PC-3 (cell line): ENCODE measurements at regions of chr3 and their contacts with region 1.

Region 1: DNA sequence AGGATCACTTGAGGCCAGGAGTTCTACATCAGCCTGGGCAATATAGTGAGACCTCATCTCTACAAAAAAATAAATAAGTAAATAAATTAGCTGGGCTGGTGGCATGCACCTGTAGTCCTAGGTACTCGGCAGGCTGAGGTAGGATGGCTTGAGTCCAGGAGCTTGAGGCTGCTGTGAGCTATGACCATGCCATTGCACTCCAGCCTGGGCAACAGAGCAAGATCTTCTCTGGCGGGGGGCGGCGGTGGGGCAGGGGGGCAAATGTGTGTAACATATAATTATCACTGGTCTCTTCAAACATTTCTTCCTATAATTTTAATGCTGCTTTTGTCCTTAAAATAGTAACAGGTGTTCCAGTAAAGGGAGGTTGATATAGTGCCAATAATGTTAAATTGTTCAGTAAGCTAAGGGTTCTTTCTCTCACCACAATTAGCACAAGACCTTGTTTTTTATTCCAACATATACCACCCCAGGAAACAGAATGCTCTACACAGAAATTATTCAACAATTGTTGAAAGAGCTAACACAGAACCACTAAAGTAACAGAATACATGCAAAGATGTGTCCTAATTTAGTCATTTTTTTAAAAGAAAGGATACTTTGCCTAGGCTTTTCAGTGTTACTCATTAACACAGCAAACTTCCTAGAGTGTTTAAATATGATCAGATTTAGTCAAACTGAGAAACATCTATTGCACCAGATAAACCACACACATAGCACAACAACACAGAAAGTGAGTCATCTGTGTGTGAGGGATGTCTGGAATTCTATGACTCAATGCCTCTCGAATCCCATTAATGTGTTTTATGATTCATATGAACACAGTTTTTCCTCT is 29.1 kb downstream of the ANKRD28 start:
- DNase-seq: peak; percentile 95
- ATAC-seq: peak; percentile 93
- H3K4me3 ChIP-seq: peak overlapping the region; percentile 17; the same call in 1 of the 2 replicates
- H3K27ac ChIP-seq: peak overlapping the region; percentile 81
- H3K4me1 ChIP-seq: peaks cover 22% of the 10 kb centered on the region
- H3K27me3 ChIP-seq: no peaks in the 10 kb centered on the region
- CTCF ChIP-seq: no peak

Region 2: GRCh38 chr3:15636003-15636709 is 132.5 kb before region 1 on chr3:
- CTCF ChIA-PET with region 1: no interaction called
- POLR2A ChIA-PET with region 1: no interaction called
- intact Hi-C with region 1: loop called (anchors 2 kb)
- DNase-seq: peak; percentile 93
- ATAC-seq: peak; percentile 67
- H3K4me3 ChIP-seq: peak overlapping the region; percentile 53
- H3K27ac ChIP-seq: peak overlapping the region; percentile 97
- H3K4me1 ChIP-seq: peaks cover 72% of the 10 kb centered on the region
- H3K27me3 ChIP-seq: no peaks in the 10 kb centered on the region
- CTCF ChIP-seq: no peak

Region 3: GRCh38 chr3:15660055-15660935 is 108.3 kb before region 1 on chr3:
- CTCF ChIA-PET with region 1: no interaction called
- POLR2A ChIA-PET with region 1: no interaction called
- intact Hi-C with region 1: loop called (anchors 1 kb)
- DNase-seq: peak; percentile 75
- ATAC-seq: peak; percentile 85
- H3K4me3 ChIP-seq: no peak overlapping the region
- H3K27ac ChIP-seq: peak overlapping the region; percentile 80
- H3K4me1 ChIP-seq: peaks cover 18% of the 10 kb centered on the region
- H3K27me3 ChIP-seq: no peaks in the 10 kb centered on the region
- CTCF ChIP-seq: no peak

Region 4: DNA sequence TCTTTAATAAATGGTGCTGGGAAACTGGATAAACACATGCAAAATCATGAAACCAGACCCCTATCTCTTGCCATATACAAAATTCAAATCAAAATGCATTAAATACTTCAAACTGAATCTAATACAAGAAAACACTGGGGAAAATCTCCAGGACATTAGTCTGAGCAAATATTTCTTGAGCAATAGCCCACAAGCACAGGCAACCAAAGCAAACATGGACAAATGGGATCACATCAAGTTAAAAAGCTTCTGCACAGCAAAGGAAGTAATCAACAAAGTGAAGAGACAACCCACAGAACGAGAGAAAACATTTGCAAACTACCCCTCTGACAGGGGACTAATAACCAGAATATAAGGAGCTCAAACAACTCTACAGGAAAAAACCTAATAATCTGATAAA is 22.9 kb after region 1 on chr3:
- CTCF ChIA-PET with region 1: no interaction called
- POLR2A ChIA-PET with region 1: no interaction called
- intact Hi-C with region 1: no loop called
- DNase-seq: no peak
- ATAC-seq: no peak
- H3K4me3 ChIP-seq: no peak overlapping the region
- H3K27ac ChIP-seq: no peak overlapping the region
- H3K4me1 ChIP-seq: peaks cover 24% of the 10 kb centered on the region
- H3K27me3 ChIP-seq: no peaks in the 10 kb centered on the region
- CTCF ChIP-seq: no peak

Region 5: GRCh38 chr3:15805756-15806266 is 37.2 kb after region 1 on chr3:
- CTCF ChIA-PET with region 1: no interaction called
- POLR2A ChIA-PET with region 1: interaction called, 45 read pairs
- intact Hi-C with region 1: no loop called
- DNase-seq: peak; percentile 77
- ATAC-seq: peak; percentile 47
- H3K4me3 ChIP-seq: 0 out of 2 replicates have a peak overlapping the region, but pooled peaks have one; percentile 8
- H3K27ac ChIP-seq: peak overlapping the region; percentile 75
- H3K4me1 ChIP-seq: peaks cover 38% of the 10 kb centered on the region
- H3K27me3 ChIP-seq: no peaks in the 10 kb centered on the region
- CTCF ChIP-seq: no peak